CD8-positive, alpha-beta T cell (primary cell): ENCODE measurements at regions of chr16 and their contacts with region 1.

Region 1: GRCh38 chr16:72066747-72067146 is 3.7 kb downstream of the HPR start:
- DNase-seq: peak in 2 of 9 experiments; percentile 31 to 53
- ATAC-seq: peak; percentile 46
- H3K4me3 ChIP-seq: no peak overlapping the region
- H3K4me3 Mint-ChIP-seq: no peak overlapping the region
- H3K27ac ChIP-seq: no peak overlapping the region
- H3K27ac Mint-ChIP-seq: no peak overlapping the region
- H3K4me1 ChIP-seq: no peaks in the 10 kb centered on the region
- H3K4me1 Mint-ChIP-seq: no peaks in the 10 kb centered on the region
- H3K27me3 ChIP-seq: no peaks in the 10 kb centered on the region
- H3K27me3 Mint-ChIP-seq: no peaks in the 10 kb centered on the region
- CTCF ChIP-seq: peak; percentile 55

Region 2: GRCh38 chr16:72099377-72099818 is 32.7 kb after region 1 on chr16:
- CTCF ChIA-PET with region 1: interaction called, 10 read pairs
- POLR2A ChIA-PET with region 1: no interaction called
- intact Hi-C with region 1: loop called (anchors 1 kb)
- DNase-seq: peak in 6 of 9 experiments; percentile 8 to 66 (median 34)
- ATAC-seq: peak; percentile 94
- H3K4me3 ChIP-seq: no peak overlapping the region
- H3K4me3 Mint-ChIP-seq: no peak overlapping the region
- H3K27ac ChIP-seq: no peak overlapping the region
- H3K27ac Mint-ChIP-seq: no peak overlapping the region
- H3K4me1 ChIP-seq: peaks cover 10% of the 10 kb centered on the region
- H3K4me1 Mint-ChIP-seq: peaks cover 17% of the 10 kb centered on the region
- H3K27me3 ChIP-seq: no peaks in the 10 kb centered on the region
- H3K27me3 Mint-ChIP-seq: no peaks in the 10 kb centered on the region
- CTCF ChIP-seq: no peak

Region 3: DNA sequence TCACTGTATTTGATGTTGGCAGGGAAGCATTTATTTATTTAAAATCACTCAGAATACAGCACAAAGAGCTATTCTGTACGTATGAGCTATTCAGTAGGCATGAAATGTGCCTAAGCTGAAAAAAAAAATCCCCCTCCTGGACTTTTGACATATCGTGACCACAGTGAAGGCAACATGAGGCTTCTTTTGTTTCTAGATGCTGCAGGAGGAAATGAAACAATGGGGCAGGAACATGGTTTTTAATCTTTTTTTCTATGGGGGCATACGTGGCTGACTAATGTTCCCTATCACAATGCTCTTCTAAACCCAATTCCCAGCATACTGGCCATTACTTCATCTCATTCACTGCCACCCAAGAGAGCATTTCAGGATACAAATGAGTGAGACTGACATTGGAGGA is 296.2 kb after region 1 on chr16:
- CTCF ChIA-PET with region 1: no interaction called
- POLR2A ChIA-PET with region 1: no interaction called
- intact Hi-C with region 1: no loop called
- DNase-seq: no peak
- ATAC-seq: no peak
- H3K4me3 ChIP-seq: no peak overlapping the region
- H3K4me3 Mint-ChIP-seq: no peak overlapping the region
- H3K27ac ChIP-seq: no peak overlapping the region
- H3K27ac Mint-ChIP-seq: no peak overlapping the region
- H3K4me1 ChIP-seq: no peaks in the 10 kb centered on the region
- H3K4me1 Mint-ChIP-seq: no peaks in the 10 kb centered on the region
- H3K27me3 ChIP-seq: no peaks in the 10 kb centered on the region
- H3K27me3 Mint-ChIP-seq: no peaks in the 10 kb centered on the region
- CTCF ChIP-seq: no peak

Region 4: GRCh38 chr16:74034862-74035261 is 1968.1 kb after region 1 on chr16:
- CTCF ChIA-PET with region 1: no interaction called
- POLR2A ChIA-PET with region 1: no interaction called
- intact Hi-C with region 1: loop called in 1 of 2 experiments (anchors 10 kb)
- DNase-seq: peak in 1 of 9 experiments; percentile 1
- ATAC-seq: no peak
- H3K4me3 ChIP-seq: no peak overlapping the region
- H3K4me3 Mint-ChIP-seq: no peak overlapping the region
- H3K27ac ChIP-seq: no peak overlapping the region
- H3K27ac Mint-ChIP-seq: no peak overlapping the region
- H3K4me1 ChIP-seq: no peaks in the 10 kb centered on the region
- H3K4me1 Mint-ChIP-seq: no peaks in the 10 kb centered on the region
- H3K27me3 ChIP-seq: no peaks in the 10 kb centered on the region
- H3K27me3 Mint-ChIP-seq: no peaks in the 10 kb centered on the region
- CTCF ChIP-seq: no peak